CD8-positive, alpha-beta T cell (primary cell): ENCODE measurements at regions of chr17 and their contacts with region 1.

Region 1: GRCh38 chr17:36722121-36722902 is 120.9 kb downstream of the MRM1 start:
- DNase-seq: peak; percentile 53 to 91 (median 77)
- ATAC-seq: peak; percentile 95
- H3K4me3 ChIP-seq: peak overlapping the region; percentile 49 to 61
- H3K4me3 Mint-ChIP-seq: peak overlapping the region; percentile 84
- H3K27ac ChIP-seq: peak overlapping the region; percentile 66 to 82
- H3K27ac Mint-ChIP-seq: peak overlapping the region; percentile 99
- H3K4me1 ChIP-seq: peaks cover 42% of the 10 kb centered on the region
- H3K4me1 Mint-ChIP-seq: peaks cover 60% of the 10 kb centered on the region
- H3K27me3 ChIP-seq: no peaks in the 10 kb centered on the region
- H3K27me3 Mint-ChIP-seq: no peaks in the 10 kb centered on the region
- CTCF ChIP-seq: no peak

Region 2: DNA sequence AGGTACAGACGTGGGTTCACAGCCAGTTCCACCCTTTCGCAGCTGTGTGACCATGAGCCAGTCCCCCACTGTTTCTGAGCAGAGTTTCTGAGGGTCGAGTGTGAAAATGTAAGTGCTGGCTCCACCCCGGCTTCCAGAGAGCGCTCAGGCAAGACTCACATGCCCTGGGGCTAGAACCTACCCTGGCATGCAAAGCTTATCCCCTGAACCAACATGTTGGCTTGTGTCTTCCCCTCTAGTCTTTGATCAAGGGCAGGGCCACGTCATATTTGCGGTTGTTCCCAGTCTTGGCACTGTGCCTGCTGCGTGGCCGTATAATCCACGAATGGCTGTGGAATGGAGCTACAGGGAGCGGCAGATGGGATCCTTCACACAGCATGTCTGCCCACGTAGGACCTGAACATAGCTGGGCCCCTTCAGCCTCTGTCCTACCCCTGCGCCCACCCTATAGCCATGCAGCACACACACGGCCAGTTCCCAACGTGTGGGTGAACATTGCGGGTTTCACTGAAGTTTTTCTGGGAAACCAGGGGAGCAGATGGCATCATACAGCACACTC is 36.1 kb before region 1 on chr17:
- CTCF ChIA-PET with region 1: no interaction called
- POLR2A ChIA-PET with region 1: no interaction called
- intact Hi-C with region 1: no loop called
- DNase-seq: no peak
- ATAC-seq: no peak
- H3K4me3 ChIP-seq: no peak overlapping the region
- H3K4me3 Mint-ChIP-seq: no peak overlapping the region
- H3K27ac ChIP-seq: no peak overlapping the region
- H3K27ac Mint-ChIP-seq: no peak overlapping the region
- H3K4me1 ChIP-seq: no peaks in the 10 kb centered on the region
- H3K4me1 Mint-ChIP-seq: no peaks in the 10 kb centered on the region
- H3K27me3 ChIP-seq: no peaks in the 10 kb centered on the region
- H3K27me3 Mint-ChIP-seq: peaks cover 12% of the 10 kb centered on the region
- CTCF ChIP-seq: no peak

Region 3: GRCh38 chr17:36755586-36755985 is 33.3 kb after region 1 on chr17:
- CTCF ChIA-PET with region 1: interaction called, 5 read pairs
- POLR2A ChIA-PET with region 1: no interaction called
- intact Hi-C with region 1: loop called in 1 of 2 experiments (anchors 5 kb)
- DNase-seq: peak in 7 of 9 experiments; percentile 8 to 55 (median 38)
- ATAC-seq: no peak
- H3K4me3 ChIP-seq: no peak overlapping the region
- H3K4me3 Mint-ChIP-seq: no peak overlapping the region
- H3K27ac ChIP-seq: no peak overlapping the region
- H3K27ac Mint-ChIP-seq: no peak overlapping the region
- H3K4me1 ChIP-seq: no peaks in the 10 kb centered on the region
- H3K4me1 Mint-ChIP-seq: no peaks in the 10 kb centered on the region
- H3K27me3 ChIP-seq: no peaks in the 10 kb centered on the region
- H3K27me3 Mint-ChIP-seq: peaks cover 4% of the 10 kb centered on the region
- CTCF ChIP-seq: peak; percentile 39